Activated CD4-positive, alpha-beta memory T cell treated with anti-CD3 and anti-CD28 coated beads, Interleukin-2, amount 10 ng/mL, durations not matched to agents 7 days and 5 days (primary cell): ENCODE measurements at regions of chr5 and their contacts with region 1.

Region 1: DNA sequence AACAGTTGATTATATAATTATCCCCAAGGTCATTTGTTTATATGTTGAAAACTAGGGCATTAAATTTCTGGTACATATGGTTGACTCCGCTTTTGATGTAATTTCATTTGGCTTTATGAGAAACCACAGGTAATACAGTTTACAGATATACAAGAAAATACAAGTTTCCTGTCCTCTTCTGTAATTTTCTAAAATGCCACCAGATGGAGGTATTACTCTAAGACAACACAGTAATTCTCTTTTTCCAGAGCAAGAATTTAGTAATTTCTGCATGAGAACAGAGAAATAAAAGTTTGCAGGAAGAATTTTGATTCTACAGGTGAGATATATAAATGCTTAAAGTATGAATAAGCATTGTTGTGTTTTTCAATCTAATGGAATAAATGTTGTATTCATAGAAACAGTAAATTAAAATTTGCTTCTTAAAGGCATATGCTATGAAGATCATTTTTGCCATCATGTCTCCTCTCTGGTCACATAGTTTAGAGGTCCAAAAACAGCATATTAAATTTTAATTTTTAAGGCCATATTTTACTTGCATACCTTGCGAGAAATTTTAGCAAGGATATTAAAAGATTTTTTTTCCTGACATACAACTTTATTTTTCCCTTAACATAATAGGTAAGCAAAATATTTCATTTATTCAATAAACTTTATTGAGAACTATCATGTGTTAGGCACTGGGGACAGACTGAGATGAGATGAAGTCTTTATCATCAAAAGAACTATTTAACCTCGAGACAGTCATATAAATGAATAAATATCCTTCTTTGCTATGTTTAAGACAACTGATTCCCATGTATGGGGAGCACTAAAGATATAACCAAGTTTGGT is 22.7 kb downstream of the CHD1 start:
- DNase-seq: no peak
- H3K4me3 Mint-ChIP-seq: no peak overlapping the region
- H3K27ac Mint-ChIP-seq: no peak overlapping the region
- H3K4me1 Mint-ChIP-seq: peaks cover 43% of the 10 kb centered on the region
- H3K27me3 Mint-ChIP-seq: no peaks in the 10 kb centered on the region

Region 2: GRCh38 chr5:98923966-98924365 is 17.9 kb after region 1 on chr5:
- CTCF ChIA-PET with region 1: interaction called, 13 read pairs
- POLR2A ChIA-PET with region 1: interaction called, 77 read pairs
- DNase-seq: no peak
- H3K4me3 Mint-ChIP-seq: no peak overlapping the region
- H3K27ac Mint-ChIP-seq: peak overlapping the region; percentile 58
- H3K4me1 Mint-ChIP-seq: peaks cover 51% of the 10 kb centered on the region
- H3K27me3 Mint-ChIP-seq: no peaks in the 10 kb centered on the region

Region 3: DNA sequence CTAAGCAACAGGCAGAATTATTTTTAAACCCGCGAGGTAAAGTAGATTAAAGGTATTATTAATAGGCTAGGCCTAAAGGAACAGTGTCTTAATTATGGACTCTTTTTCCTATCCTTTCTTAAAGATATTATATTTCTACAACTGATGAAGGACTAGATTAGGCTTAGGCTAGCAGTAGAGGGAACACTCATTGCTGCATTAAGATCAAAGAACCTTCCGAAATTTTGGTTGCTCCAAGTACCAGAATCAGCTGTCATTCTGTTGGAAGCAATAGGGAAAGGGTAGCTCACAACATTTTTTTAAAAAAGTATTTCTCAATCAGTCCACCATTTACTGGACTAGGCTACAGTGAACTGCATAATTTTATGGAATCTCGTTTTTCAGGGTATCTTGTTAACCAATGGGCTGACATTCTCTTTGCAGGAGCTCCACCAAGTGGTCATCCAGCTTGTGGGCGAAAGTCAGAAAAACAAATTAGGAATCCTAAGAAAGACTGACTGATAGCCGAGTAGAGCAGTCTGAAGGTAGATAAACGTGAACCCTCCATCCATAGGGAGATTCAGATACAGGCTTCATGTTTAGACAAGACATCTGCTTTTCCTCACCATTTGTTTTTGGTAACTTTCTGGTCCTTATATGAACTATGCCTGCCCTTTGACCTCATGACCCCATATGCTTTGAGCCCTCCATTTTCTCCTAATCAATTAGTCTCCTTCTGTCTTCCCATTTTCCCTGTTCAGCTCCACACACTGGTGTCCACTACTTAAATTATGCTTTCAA is 126.3 kb after region 1 on chr5:
- CTCF ChIA-PET with region 1: interaction called, 15 read pairs
- POLR2A ChIA-PET with region 1: no interaction called
- DNase-seq: peak; percentile 28
- H3K4me3 Mint-ChIP-seq: peak overlapping the region; percentile 76
- H3K27ac Mint-ChIP-seq: peak overlapping the region; percentile 93
- H3K4me1 Mint-ChIP-seq: peaks cover 66% of the 10 kb centered on the region
- H3K27me3 Mint-ChIP-seq: no peaks in the 10 kb centered on the region

Region 4: DNA sequence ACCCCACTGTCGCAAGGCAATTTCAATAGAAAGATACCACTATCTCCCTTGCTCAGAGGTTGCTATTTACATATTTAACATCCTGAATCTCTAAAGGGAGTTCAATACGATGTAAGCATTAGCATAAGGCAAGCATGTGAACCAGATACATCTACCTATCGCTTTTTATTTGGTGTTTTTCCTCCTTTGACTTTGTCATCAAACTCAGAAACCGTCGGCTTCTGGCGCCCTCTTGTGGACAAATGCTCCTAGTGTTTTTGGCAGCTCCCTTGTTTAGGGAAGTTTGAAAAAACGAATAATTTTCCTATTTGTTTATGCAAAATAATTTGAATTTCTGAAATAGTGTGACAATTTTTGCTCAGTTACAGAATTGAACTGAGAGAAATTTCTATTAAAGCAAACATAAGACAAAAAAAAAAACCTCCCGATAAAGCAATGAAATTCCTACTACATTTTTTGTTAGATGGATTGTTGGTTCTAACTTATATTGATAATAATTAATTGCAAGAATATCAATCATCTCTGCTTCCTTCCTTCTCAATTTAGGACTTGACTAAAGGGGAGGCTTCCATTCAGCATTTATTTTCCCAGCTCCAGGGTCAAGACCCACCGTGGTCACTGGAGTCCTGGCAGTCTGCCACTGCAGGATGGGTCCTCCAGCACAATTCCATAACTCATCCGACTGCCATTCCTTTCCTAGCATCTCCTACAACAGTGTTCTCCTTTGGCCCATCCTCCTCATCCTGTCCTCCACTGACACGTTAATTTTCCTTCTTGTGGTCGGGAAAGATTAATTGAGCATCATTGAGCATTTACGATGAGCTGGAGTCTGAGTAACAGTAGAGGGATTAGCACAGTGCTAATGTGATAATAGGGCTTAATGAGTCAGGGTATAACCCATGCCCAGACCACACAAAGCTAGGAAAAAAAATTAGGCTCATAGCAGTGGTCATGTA is 154.5 kb after region 1 on chr5:
- CTCF ChIA-PET with region 1: interaction called, 46 read pairs
- POLR2A ChIA-PET with region 1: interaction called, 13 read pairs
- DNase-seq: peak; percentile 86
- H3K4me3 Mint-ChIP-seq: no peak overlapping the region
- H3K27ac Mint-ChIP-seq: no peak overlapping the region
- H3K4me1 Mint-ChIP-seq: peaks cover 2% of the 10 kb centered on the region
- H3K27me3 Mint-ChIP-seq: peaks cover 6% of the 10 kb centered on the region